ENCODE measurements at regions of chr14 and their contacts with region 1.

Region 1: DNA sequence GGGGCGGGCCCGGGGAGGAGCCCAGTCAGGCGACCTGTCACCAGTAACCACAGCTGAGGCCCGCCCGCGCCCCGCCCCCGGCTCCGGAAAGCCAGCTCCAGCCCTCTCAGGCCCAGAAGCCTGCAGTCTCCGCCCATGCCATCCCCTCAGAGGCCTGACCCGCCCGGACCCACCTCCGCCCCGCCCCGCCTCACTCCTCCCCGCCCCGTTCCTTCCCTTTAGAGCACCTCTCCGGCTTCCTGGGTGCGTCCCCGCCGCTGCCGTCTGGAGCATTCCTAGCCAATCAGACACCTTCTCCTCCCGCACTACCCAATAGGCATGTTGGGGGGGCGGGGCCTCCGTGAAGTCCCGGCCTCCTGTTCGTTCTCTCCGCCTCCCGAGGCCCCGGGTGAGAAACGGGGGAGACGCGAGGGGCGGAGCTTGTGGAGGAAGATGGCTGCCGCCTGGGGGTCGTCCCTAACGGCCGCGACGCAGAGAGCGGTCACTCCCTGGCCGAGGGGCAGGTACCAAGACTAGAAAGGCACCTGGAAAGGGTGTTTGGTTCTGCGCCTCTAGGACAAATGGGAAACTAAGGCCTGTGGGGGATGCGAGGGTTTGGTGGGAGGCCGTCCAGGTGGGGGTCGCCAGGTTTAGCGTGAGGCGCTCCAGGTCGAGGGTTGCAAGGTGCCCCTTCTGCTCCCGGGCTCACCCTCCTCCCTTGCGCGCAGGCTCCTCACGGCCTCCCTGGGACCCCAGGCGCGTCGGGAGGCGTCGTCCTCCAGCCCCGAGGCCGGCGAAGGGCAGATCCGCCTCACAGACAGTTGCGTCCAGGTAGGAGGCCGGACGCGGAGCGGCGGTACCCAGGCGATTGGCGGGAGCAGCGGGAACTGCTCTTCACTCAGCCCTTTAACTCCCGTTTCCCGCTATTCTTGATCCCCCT is at the start of gene ISCA2:
- DNase-seq: peak; percentile 98
- H3K4me3 ChIP-seq: peak within 1 kb of the TSS; percentile 94
- CTCF ChIP-seq: no peak

Region 2: GRCh38 chr14:74395094-74395493 is 98.5 kb before region 1 on chr14:
- in situ Hi-C with region 1: loop called (anchors 5 kb)
- DNase-seq: no peak
- H3K4me3 ChIP-seq: no peak overlapping the region
- CTCF ChIP-seq: no peak

Region 3: GRCh38 chr14:74414403-74415114 is 79.0 kb before region 1 on chr14:
- in situ Hi-C with region 1: loop called (anchors 5 kb)
- DNase-seq: no peak
- H3K4me3 ChIP-seq: no peak overlapping the region
- CTCF ChIP-seq: no peak

Region 4: DNA sequence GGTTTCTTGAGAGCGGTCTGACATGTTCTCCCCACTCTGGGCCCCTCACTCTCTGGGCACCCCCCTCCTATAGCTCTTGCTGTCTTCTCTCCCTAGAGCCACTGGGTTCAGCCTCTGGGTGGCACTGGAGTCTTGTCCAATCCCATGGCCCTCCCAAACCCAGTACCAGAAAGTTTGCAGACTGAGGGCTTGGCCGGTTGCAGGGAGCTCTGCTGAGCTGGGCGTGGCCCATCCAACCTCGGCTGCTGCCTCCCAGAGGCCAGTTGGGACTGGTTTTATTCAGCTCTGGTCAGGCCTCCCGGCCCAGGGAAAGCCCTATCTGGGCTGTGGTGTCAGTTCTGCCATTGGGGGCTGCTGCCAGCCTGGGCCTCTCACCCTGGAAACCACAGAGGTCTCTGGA is 37.9 kb after region 1 on chr14:
- in situ Hi-C with region 1: no loop called
- DNase-seq: no peak
- H3K4me3 ChIP-seq: no peak overlapping the region
- CTCF ChIP-seq: peak; percentile 25

Measured in astrocyte of the cerebellum (primary cell).